PC-3 (cell line): ENCODE measurements at regions of chr7 and their contacts with region 1.

Region 1: DNA sequence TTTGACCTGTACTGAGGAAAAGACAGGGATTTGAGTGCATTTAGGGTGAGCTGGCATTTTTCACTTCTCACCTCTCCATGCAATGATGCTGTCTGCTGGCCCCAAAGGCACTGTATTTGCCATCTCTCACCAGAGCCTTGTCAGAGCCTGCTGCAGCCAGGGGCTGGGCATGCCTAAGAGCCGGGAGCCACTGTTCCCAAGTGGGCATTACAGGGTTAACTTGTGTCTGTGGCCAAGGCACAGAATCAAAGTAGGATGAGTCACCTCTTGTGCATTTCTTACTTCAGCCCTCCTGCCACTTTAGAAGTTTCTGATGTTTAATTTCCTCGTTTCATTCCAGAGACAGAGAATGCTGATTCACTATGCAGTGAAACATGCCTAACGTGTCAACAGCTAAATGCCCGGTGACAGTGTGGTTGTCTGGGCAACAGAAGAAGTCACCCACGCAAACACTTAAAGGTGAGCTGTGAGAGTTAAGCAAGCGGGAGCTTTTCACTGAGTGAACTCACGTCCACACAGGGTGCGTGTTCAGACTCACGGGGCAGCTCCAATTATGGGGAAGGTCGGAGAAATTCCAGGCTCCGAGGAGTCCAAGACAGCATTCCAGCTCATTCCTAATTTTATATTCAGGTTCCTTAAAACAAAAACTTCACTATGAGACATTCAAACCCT is 57.1 kb upstream of the IGFBP3 start:
- DNase-seq: peak; percentile 98
- ATAC-seq: peak; percentile 89
- H3K4me3 ChIP-seq: peak overlapping the region; percentile 31; the same call in 1 of the 2 replicates
- H3K27ac ChIP-seq: peak overlapping the region; percentile 99
- H3K4me1 ChIP-seq: peaks cover 42% of the 10 kb centered on the region
- H3K27me3 ChIP-seq: no peaks in the 10 kb centered on the region
- CTCF ChIP-seq: no peak

Region 2: DNA sequence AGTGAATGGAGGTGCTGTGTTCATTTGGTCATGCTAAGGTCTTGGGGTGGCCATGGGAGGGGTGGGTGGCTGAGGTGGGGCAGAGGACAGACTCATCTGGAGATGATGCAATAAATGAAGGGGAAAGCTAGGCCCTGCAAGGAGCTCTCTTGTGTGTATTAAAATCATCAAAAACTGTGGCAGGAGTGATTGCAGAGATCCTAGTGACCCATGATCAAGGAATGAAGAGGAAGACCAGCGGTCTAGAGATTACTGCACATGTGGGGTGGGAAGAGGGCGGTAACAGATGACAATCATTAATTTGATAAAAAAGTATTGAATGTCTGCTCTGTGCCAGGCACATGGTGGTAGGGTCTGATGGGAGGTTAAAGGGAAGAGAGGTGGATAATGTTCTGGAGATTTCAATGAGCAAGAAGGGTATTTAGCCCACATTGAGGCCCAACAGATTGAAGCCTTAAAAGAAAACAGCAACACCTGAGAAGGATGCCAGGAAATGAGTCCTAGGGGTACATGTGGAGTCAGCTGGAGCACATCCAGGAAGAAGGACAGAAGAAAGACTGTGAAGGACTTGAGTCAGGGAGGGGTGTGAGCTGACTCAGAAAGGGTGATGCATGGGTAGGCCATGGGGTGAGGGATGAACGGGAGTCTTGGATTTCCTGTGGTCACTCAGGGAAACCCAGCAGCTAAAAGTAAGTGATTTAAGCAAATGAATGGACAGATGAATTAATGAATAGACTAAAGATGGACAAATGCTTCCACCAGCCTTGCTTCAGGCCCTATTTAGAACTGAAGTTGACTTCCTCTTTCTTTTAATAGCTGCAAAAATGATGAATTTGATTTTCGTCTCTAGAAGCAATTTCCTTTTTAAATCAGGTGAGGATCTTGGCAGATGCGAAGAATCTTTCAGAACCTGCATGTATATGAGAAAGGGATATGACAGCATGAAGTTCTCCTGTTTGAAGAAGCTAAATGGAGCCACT is 26.0 kb after region 1 on chr7:
- CTCF ChIA-PET with region 1: no interaction called
- POLR2A ChIA-PET with region 1: interaction called, 5 read pairs
- intact Hi-C with region 1: loop called (anchors 1 kb)
- DNase-seq: peak; percentile 95
- ATAC-seq: peak; percentile 94
- H3K4me3 ChIP-seq: no peak overlapping the region
- H3K27ac ChIP-seq: peak overlapping the region; percentile 91
- H3K4me1 ChIP-seq: peaks cover 34% of the 10 kb centered on the region
- H3K27me3 ChIP-seq: no peaks in the 10 kb centered on the region
- CTCF ChIP-seq: no peak

Region 3: DNA sequence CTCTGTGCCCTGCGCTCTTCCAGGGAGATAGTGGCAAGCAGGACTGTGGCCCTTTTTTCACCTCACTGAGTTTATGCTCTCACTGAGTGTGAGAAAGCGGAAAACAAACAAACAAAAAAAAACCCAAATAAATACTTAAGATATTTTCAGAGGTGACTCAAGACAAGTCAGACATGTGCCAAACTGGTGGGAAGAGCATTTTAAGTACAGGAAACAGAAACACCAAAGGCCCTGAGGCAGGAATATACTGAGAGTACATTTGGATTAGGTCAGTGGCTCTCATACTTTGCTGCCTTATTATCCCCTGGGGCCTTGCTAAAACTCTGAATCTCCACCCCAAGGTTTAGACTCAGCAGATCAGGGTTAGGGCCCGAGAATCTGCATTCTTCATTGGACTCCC is 54.8 kb after region 1 on chr7:
- CTCF ChIA-PET with region 1: no interaction called
- POLR2A ChIA-PET with region 1: no interaction called
- intact Hi-C with region 1: loop called (anchors 2 kb)
- DNase-seq: peak; percentile 91
- ATAC-seq: peak; percentile 72
- H3K4me3 ChIP-seq: no peak overlapping the region
- H3K27ac ChIP-seq: peak overlapping the region; percentile 95
- H3K4me1 ChIP-seq: peaks cover 37% of the 10 kb centered on the region
- H3K27me3 ChIP-seq: no peaks in the 10 kb centered on the region
- CTCF ChIP-seq: no peak

Region 4: GRCh38 chr7:46414946-46415345 is 436.8 kb after region 1 on chr7:
- CTCF ChIA-PET with region 1: no interaction called
- POLR2A ChIA-PET with region 1: no interaction called
- intact Hi-C with region 1: no loop called
- DNase-seq: no peak
- ATAC-seq: no peak
- H3K4me3 ChIP-seq: no peak overlapping the region
- H3K27ac ChIP-seq: no peak overlapping the region
- H3K4me1 ChIP-seq: no peaks in the 10 kb centered on the region
- H3K27me3 ChIP-seq: no peaks in the 10 kb centered on the region
- CTCF ChIP-seq: no peak

Region 5: GRCh38 chr7:46486256-46487206 is 508.4 kb after region 1 on chr7:
- CTCF ChIA-PET with region 1: no interaction called
- POLR2A ChIA-PET with region 1: interaction called, 10 read pairs
- intact Hi-C with region 1: no loop called
- DNase-seq: peak; percentile 80
- ATAC-seq: peak; percentile 82
- H3K4me3 ChIP-seq: peak overlapping the region; percentile 7; the same call in 1 of the 2 replicates
- H3K27ac ChIP-seq: peak overlapping the region; percentile 88
- H3K4me1 ChIP-seq: peaks cover 39% of the 10 kb centered on the region
- H3K27me3 ChIP-seq: no peaks in the 10 kb centered on the region
- CTCF ChIP-seq: no peak